Activated CD4-positive, alpha-beta T cell treated with anti-CD3 and anti-CD28 coated beads, Interleukin-2, amount 10 ng/mL, durations not matched to agents 24 days and 14 days (primary cell): ENCODE measurements at regions of chr9 and their contacts with region 1.

Region 1: DNA sequence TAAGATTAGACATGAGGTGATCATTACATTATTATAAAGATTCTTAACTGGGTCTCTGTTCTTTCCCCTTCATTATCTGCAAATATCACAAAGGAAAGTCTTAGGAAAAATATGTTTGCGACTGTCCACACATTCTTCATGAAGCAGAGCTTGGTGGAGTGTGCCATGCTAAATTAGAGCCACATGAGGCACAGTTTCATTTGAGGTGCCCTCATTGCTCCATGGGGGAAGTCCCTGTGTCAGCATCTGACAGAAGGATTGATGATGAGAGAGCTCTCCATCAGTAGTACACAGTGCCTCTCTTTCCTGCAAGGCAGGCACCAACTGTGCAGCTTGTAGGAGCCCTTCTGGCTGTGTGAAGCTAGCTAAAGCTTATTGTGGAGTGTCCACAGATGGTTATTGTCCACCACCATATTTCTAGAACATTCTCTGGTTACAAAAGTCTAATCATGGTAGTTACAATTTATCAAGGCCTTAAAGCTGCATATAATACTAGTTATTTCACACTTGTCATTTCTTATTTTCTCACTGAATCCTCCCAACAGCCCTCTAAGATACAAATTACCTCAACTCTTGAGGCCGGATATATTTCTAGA is 63.9 kb downstream of the C9orf152 start:
- DNase-seq: peak; percentile 84
- H3K4me3 Mint-ChIP-seq: peak overlapping the region; percentile 73
- H3K27ac Mint-ChIP-seq: peak overlapping the region; percentile 95
- H3K4me1 Mint-ChIP-seq: peaks cover 72% of the 10 kb centered on the region
- H3K27me3 Mint-ChIP-seq: no peaks in the 10 kb centered on the region

Region 2: GRCh38 chr9:110105107-110105506 is 38.9 kb before region 1 on chr9:
- intact Hi-C with region 1: loop called (anchors 5 kb)
- DNase-seq: no peak
- H3K4me3 Mint-ChIP-seq: no peak overlapping the region
- H3K27ac Mint-ChIP-seq: no peak overlapping the region
- H3K4me1 Mint-ChIP-seq: peaks cover 22% of the 10 kb centered on the region
- H3K27me3 Mint-ChIP-seq: no peaks in the 10 kb centered on the region